Esophagus squamous epithelium (tissue), 5 donors: ENCODE measurements at regions of chr6 and their contacts with region 1.

Region 1: DNA sequence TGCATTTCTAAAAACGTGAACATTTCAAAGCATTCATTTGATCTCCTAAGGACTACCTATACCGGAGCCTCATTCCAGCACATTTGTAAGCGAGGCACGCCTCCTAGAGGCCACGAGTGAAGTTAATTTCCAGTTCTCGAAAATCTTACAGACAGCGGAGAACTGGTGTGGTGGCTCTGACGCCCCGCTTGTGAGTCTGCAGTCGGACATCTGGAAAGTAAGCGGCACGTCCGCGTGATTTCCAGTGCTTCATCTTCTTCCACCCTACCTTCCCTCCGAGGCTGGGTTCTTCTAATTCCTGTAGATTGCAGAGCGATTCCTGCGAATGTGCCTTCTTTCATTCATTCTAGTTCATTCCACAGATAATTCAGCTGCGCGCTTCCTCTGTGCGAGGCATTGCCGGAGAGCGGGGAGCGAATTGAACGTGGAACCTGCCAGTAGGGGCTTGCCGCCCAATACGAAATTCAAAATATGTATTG is 810 bp upstream of the PRIM2 start:
- DNase-seq: peak; percentile 28
- H3K4me3 ChIP-seq: peak overlapping the region; percentile 44 to 84 (median 68)
- H3K27ac ChIP-seq: peak overlapping the region; percentile 67 to 85 (median 72)
- H3K4me1 ChIP-seq: peaks cover 16 to 37% (median 19%) of the 10 kb centered on the region in 3 donors
- H3K27me3 ChIP-seq: no peaks in the 10 kb centered on the region
- CTCF ChIP-seq: peak; percentile 67 to 88 (median 76)
- POLR2A ChIP-seq: no peak

Region 2: GRCh38 chr6:56902641-56903464 is 413.8 kb before region 1 on chr6:
- intact Hi-C with region 1: loop called (anchors 10 kb)
- DNase-seq: no peak
- H3K4me3 ChIP-seq: peak overlapping the region in 1 of 4 donors; percentile 37
- H3K27ac ChIP-seq: peak overlapping the region in 1 of 4 donors; percentile 28
- H3K4me1 ChIP-seq: peaks cover 0 to 20% (median 7%) of the 10 kb centered on the region in 3 donors
- H3K27me3 ChIP-seq: peaks cover 0 to 24% (median 0%) of the 10 kb centered on the region in 4 donors
- CTCF ChIP-seq: peak in 5 of 6 experiments; percentile 32 to 81 (median 55)
- POLR2A ChIP-seq: no peak

Region 3: GRCh38 chr6:56955171-56956045 is 361.2 kb before region 1 on chr6:
- intact Hi-C with region 1: loop called (anchors 5 kb)
- DNase-seq: no peak
- H3K4me3 ChIP-seq: peak overlapping the region; percentile 44 to 85 (median 60)
- H3K27ac ChIP-seq: peak overlapping the region; percentile 45 to 83 (median 61)
- H3K4me1 ChIP-seq: peaks cover 4 to 36% (median 16%) of the 10 kb centered on the region in 3 donors
- H3K27me3 ChIP-seq: peaks cover 0 to 69% (median 0%) of the 10 kb centered on the region in 4 donors
- CTCF ChIP-seq: peak in 5 of 6 experiments; percentile 51 to 82 (median 67)
- POLR2A ChIP-seq: no peak